ENCODE measurements at regions of chr15 and their contacts with region 1.

Region 1: GRCh38 chr15:81000624-81001151 is at the start of gene TLNRD1:
- DNase-seq: peak; percentile 46
- H3K4me3 ChIP-seq: peak within 1 kb of the TSS; percentile 84
- H3K27me3 ChIP-seq: no peaks in the 10 kb centered on the region
- CTCF ChIP-seq: no peak
- polyA plus RNA-seq, gene TLNRD1: 3.9 and 5.2 TPM in 2 replicates

Region 2: DNA sequence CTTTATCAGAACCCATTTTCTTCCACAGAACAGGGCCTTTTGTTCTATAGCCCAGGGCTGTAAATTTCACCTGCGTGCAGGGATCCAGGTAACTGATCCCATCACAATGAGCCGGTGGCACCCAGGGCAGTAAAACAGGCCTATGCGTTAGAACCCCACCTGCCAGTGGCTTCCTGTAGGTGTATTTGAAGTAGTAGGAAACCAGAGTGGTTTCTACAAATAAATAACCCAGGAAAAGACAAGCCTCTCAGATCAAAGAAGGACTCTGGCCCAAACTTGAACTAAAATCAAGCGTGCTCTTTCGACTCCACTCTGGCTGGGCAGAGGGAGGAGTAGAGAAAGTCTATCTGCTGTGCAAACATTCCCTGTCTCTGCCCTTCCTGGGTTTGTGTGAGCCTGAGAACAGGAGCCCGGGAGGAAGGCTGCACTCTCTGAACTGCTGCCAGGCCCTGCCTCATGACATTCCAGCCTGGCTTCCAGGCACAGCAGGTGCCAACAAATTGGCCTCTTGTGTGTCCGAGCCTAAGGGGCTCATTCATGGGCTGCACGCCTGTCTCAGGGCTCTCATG is 143.8 kb before region 1 on chr15:
- CTCF ChIA-PET with region 1: no interaction called
- POLR2A ChIA-PET with region 1: no interaction called
- DNase-seq: no peak
- H3K4me3 ChIP-seq: no peak overlapping the region
- H3K27me3 ChIP-seq: no peaks in the 10 kb centered on the region
- CTCF ChIP-seq: no peak

Region 3: DNA sequence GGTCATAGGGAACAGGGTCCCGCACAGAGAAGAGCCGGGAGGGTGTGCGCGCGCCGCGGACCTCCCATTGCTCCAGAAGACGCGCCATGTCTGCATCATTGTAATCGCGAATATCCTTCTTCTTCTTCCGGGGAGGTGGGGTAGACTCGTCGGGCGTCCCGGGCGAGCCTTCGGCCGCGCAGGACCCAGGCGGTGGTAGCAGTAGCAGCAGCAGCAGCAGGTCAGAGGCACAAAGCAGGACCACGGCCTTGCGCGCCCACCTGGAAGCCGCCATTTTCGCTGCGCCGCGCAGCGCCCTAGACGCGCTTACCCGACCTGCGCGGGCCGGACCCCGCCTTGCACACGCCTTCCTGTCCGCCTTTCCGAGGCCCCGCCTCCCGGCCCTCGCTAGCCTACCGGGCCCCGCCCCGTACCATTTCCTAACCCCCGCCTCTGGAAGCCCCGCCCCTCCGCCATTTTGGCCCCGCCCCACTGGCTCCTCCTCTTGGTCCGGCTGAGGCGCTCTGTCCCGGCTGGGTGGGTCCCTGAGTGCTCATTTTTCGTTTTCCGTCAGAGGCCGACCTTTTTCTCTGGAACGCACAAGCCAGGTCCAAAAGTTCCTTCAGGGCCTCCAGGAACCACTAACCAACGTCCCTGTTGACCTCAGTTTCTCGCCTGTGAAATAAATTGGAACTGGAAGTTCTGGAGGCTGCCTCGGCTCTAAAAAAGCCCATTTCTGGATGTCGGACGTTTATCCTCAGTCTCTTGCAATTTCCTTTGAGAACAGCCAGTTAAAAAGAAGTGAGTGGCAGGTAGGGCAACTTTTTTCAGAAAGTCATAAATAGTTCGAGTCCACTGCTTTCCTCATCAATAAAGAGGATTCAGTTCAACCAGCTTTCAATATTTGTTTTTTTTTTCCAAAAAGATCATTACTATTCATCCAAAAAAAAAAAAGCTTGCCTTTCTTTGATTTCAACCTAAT is 10.9 kb before region 1 on chr15 and contains the start of gene MESD:
- CTCF ChIA-PET with region 1: interaction called, 3 read pairs
- POLR2A ChIA-PET with region 1: interaction called, 12 read pairs
- DNase-seq: peak; percentile 65
- H3K4me3 ChIP-seq: peak within 1 kb of the TSS; percentile 65
- H3K27me3 ChIP-seq: no peaks in the 10 kb centered on the region
- CTCF ChIP-seq: no peak
- polyA plus RNA-seq, gene MESD: 11.0 and 17.3 TPM in 2 replicates

Region 4: GRCh38 chr15:81054236-81054635 is 53.5 kb after region 1 on chr15:
- CTCF ChIA-PET with region 1: no interaction called
- POLR2A ChIA-PET with region 1: no interaction called
- DNase-seq: peak; percentile 79
- H3K4me3 ChIP-seq: no peak overlapping the region
- H3K27me3 ChIP-seq: no peaks in the 10 kb centered on the region
- CTCF ChIP-seq: no peak